Panc1 (cell line): ENCODE measurements at regions of chr10 and their contacts with region 1.

Region 1: GRCh38 chr10:93482145-93482834 is at the start of gene MYOF:
- DNase-seq: peak; percentile 92
- ATAC-seq: peak; percentile 85
- H3K4me3 ChIP-seq: peak within 1 kb of the TSS; percentile 74 to 80
- H3K27ac ChIP-seq: peak within 1 kb of the TSS; percentile 100
- H3K4me1 ChIP-seq: peaks cover 21% of the 10 kb centered on the region
- H3K27me3 ChIP-seq: no peaks in the 10 kb centered on the region
- CTCF ChIP-seq: peak; percentile 70
- total RNA-seq, gene MYOF: 376 TPM

Region 2: DNA sequence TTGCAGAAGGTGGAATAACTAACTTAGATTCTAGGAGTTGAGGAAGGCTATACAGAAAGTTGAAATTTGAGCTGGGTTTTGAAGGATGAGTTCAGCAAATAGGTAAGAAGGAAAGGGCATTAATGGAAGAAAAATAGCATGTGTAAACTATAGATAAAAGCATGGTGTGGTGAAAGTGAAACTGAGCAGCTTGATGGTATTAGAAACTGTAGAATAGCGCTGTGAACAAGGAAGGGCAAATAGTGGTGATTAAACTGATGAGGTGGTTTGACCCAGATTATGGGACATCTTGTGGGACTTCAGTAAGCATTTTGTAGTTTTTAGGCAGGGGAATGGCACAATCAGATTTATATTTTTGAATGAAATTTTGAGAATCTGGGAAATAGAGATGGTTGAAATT is 543.4 kb before region 1 on chr10:
- CTCF ChIA-PET with region 1: no interaction called
- POLR2A ChIA-PET with region 1: no interaction called
- in situ Hi-C with region 1: no loop called
- intact Hi-C with region 1: no loop called
- DNase-seq: no peak
- ATAC-seq: no peak
- H3K4me3 ChIP-seq: no peak overlapping the region
- H3K27ac ChIP-seq: no peak overlapping the region
- H3K4me1 ChIP-seq: no peaks in the 10 kb centered on the region
- H3K27me3 ChIP-seq: no peaks in the 10 kb centered on the region
- CTCF ChIP-seq: no peak

Region 3: DNA sequence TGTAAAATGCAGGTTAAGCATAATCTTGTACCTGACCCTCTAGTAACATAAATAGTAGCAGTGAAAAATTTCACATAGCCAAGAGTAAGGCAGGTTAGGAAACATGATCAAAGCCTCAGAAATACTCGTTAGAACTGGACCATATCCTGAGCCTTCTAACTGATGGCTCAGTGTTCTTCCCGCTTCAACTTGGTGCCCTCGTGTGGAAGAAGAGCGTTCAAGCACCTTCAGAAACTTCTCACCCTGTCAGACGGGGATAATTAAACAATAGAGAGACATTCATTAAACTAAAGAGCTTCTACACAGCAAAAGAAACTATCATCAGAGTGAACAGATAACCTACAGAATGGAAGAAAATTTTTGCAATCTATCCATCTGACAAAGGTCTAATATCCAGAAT is 124.6 kb before region 1 on chr10:
- CTCF ChIA-PET with region 1: interaction called, 3 read pairs
- POLR2A ChIA-PET with region 1: interaction called, 13 read pairs
- in situ Hi-C with region 1: no loop called
- intact Hi-C with region 1: no loop called
- DNase-seq: no peak
- ATAC-seq: 0 out of 2 replicates have a peak, but pooled peaks have one; percentile 64
- H3K4me3 ChIP-seq: no peak overlapping the region
- H3K27ac ChIP-seq: no peak overlapping the region
- H3K4me1 ChIP-seq: no peaks in the 10 kb centered on the region
- H3K27me3 ChIP-seq: no peaks in the 10 kb centered on the region
- CTCF ChIP-seq: peak; percentile 73

Region 4: DNA sequence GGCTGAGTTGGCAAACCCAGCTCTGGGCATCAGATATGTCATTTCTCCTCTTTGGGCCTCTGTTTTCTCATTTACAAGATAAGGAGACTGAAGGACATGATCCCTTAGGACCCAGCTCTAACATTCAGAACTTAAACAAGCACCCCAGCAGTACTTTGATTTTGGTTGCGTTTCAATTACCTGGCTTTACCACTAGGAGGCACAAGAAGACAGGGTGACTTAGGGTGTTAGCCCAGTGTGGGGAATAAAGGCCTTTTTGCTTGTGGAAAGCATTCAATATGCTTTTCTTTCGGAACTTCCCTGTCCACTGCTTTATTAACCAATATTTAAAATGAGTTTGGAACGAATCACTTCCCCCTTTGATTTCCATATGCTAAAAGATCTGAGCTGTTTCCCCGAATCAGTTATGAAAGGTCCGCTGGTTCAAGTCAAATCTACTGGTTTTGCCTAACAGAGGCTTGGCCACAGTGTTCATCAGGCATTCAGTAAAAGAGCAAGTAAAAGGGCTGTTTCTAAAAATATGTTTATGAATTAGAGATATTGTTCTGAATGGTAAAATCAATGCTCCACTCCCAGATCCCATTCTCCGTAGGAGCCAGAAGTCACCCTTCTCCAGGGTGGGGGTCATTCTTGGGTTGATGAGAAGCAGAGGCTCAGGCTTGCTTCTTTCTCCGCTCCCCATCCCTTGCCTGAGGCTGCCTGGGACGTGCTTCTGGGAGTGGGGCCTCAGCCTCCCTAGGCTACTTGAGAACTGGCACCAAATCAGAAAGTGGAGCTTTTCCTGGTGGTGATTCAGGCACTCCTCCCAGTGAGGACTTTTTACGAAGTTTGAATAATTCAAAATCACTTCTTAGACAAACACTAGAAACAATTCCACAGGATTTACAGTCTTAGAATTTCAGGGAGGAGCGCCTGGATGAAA is 105.7 kb before region 1 on chr10:
- CTCF ChIA-PET with region 1: interaction called, 37 read pairs
- POLR2A ChIA-PET with region 1: interaction called, 4 read pairs
- in situ Hi-C with region 1: no loop called
- intact Hi-C with region 1: loop called (anchors 1 kb)
- DNase-seq: peak; percentile 84
- ATAC-seq: peak; percentile 86
- H3K4me3 ChIP-seq: no peak overlapping the region
- H3K27ac ChIP-seq: peak overlapping the region; percentile 79
- H3K4me1 ChIP-seq: peaks cover 24% of the 10 kb centered on the region
- H3K27me3 ChIP-seq: no peaks in the 10 kb centered on the region
- CTCF ChIP-seq: peak; percentile 94

Region 5: GRCh38 chr10:93438586-93439253 is 43.6 kb before region 1 on chr10:
- CTCF ChIA-PET with region 1: interaction called, 3 read pairs
- POLR2A ChIA-PET with region 1: interaction called, 3 read pairs
- in situ Hi-C with region 1: no loop called
- intact Hi-C with region 1: loop called (anchors 2 kb)
- DNase-seq: no peak
- ATAC-seq: peak; percentile 50
- H3K4me3 ChIP-seq: 0 out of 4 replicates have a peak overlapping the region, but pooled peaks of 1 of the 2 experiments have one; percentile 10
- H3K27ac ChIP-seq: peak overlapping the region; percentile 100
- H3K4me1 ChIP-seq: peaks cover 90% of the 10 kb centered on the region
- H3K27me3 ChIP-seq: no peaks in the 10 kb centered on the region
- CTCF ChIP-seq: no peak

Region 6: GRCh38 chr10:93458821-93459257 is 23.5 kb before region 1 on chr10:
- CTCF ChIA-PET with region 1: interaction called, 10 read pairs
- POLR2A ChIA-PET with region 1: interaction called, 5 read pairs
- in situ Hi-C with region 1: no loop called
- intact Hi-C with region 1: no loop called
- DNase-seq: peak; percentile 98
- ATAC-seq: peak; percentile 89
- H3K4me3 ChIP-seq: peak overlapping the region in 1 of 2 experiments; percentile 2; a peak in 1 of 4 replicates
- H3K27ac ChIP-seq: peak overlapping the region; percentile 100
- H3K4me1 ChIP-seq: peaks cover 76% of the 10 kb centered on the region
- H3K27me3 ChIP-seq: no peaks in the 10 kb centered on the region
- CTCF ChIP-seq: no peak

Region 7: GRCh38 chr10:93496322-93497041 is 14.2 kb after region 1 on chr10 and contains the start of gene CEP55:
- CTCF ChIA-PET with region 1: interaction called, 4 read pairs
- POLR2A ChIA-PET with region 1: interaction called, 13 read pairs
- in situ Hi-C with region 1: no loop called
- intact Hi-C with region 1: no loop called
- DNase-seq: no peak
- ATAC-seq: peak; percentile 98
- H3K4me3 ChIP-seq: peak within 1 kb of the TSS; percentile 84 to 93
- H3K27ac ChIP-seq: peak within 1 kb of the TSS; percentile 96
- H3K4me1 ChIP-seq: peaks cover 23% of the 10 kb centered on the region
- H3K27me3 ChIP-seq: no peaks in the 10 kb centered on the region
- CTCF ChIP-seq: no peak
- total RNA-seq, gene CEP55: 96.4 TPM

Region 8: DNA sequence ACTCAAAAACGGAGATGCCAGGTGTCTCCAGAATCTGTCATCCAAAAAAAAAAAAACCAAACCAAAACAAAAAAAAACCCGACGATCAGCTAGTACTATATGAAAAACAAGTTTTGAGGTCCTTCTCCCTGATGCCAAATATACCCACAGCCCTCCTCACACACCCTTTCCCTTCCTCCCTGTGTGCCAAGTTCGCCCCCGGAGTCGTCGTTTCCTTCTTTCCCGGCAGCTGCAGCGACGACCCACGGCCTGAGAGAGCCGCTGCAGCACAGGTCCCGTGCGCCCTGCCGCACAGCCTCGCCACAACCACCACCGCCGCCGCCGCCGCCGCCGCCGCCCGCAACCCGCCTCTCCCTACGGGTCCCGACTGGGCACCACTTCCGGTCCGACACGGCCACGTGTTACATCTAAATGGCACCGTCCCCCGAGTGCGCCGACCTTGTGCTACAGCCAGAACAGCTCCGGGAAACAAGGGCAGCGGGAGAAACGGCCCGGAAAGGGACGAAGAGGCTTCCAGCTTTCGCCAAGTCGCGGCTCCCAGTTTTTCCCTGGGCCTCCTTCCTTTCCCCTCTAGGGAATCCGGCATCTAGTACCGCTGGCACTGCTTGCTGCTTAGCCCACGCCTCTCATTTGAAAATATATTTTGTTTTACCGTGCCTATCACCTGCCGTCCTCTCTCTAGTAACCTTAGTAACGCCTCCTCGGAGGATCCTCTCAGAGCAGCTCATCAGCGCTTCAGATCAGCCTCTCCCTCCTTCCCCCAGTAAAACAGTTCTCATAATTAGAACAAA is 220.1 kb after region 1 on chr10 and contains the start of gene FRA10AC1:
- CTCF ChIA-PET with region 1: no interaction called
- POLR2A ChIA-PET with region 1: no interaction called
- in situ Hi-C with region 1: no loop called
- intact Hi-C with region 1: no loop called
- DNase-seq: peak; percentile 47
- ATAC-seq: peak; percentile 98
- H3K4me3 ChIP-seq: peak within 1 kb of the TSS; percentile 58 to 85
- H3K27ac ChIP-seq: peak within 1 kb of the TSS; percentile 91
- H3K4me1 ChIP-seq: peaks cover 9% of the 10 kb centered on the region; the same call in 1 of the 2 replicates
- H3K27me3 ChIP-seq: no peaks in the 10 kb centered on the region; the same call in 1 of the 2 replicates
- CTCF ChIP-seq: peak; percentile 74
- total RNA-seq, gene FRA10AC1: 20.3 TPM